PC-9 (cell line): ENCODE measurements at regions of chr1 and their contacts with region 1.

Region 1: GRCh38 chr1:201559679-201560162 is 20.8 kb downstream of the NAV1 start:
- DNase-seq: peak; percentile 53 to 73
- H3K4me3 ChIP-seq: no peak overlapping the region
- H3K27ac ChIP-seq: no peak overlapping the region
- H3K4me1 ChIP-seq: peaks cover 3% of the 10 kb centered on the region; the same call in 1 of the 2 replicates
- H3K27me3 ChIP-seq: no peaks in the 10 kb centered on the region
- CTCF ChIP-seq: peak; percentile 92

Region 2: DNA sequence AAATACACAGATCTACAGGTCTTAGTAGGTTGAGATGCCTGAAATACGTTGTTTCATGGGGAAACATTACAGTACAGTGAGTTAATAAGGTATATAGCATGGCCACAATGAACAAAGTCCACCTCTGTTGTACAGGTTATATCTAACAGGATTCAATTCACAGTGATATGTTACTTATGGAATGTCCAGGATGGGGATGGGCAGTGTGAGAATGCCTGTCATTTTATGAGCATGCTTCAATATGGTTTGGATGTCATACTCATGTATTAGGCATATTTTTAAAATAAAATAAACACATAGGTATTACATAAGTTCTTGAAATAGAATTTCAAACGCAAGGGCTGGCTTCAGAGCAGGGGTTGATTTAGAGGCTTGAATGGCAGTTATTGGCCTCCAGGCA is 84.6 kb before region 1 on chr1:
- CTCF ChIA-PET with region 1: no interaction called
- POLR2A ChIA-PET with region 1: no interaction called
- intact Hi-C with region 1: no loop called
- DNase-seq: peak in 1 of 2 experiments; percentile 77
- H3K4me3 ChIP-seq: no peak overlapping the region
- H3K27ac ChIP-seq: no peak overlapping the region
- H3K4me1 ChIP-seq: peaks cover 25% of the 10 kb centered on the region
- H3K27me3 ChIP-seq: no peaks in the 10 kb centered on the region
- CTCF ChIP-seq: no peak

Region 3: DNA sequence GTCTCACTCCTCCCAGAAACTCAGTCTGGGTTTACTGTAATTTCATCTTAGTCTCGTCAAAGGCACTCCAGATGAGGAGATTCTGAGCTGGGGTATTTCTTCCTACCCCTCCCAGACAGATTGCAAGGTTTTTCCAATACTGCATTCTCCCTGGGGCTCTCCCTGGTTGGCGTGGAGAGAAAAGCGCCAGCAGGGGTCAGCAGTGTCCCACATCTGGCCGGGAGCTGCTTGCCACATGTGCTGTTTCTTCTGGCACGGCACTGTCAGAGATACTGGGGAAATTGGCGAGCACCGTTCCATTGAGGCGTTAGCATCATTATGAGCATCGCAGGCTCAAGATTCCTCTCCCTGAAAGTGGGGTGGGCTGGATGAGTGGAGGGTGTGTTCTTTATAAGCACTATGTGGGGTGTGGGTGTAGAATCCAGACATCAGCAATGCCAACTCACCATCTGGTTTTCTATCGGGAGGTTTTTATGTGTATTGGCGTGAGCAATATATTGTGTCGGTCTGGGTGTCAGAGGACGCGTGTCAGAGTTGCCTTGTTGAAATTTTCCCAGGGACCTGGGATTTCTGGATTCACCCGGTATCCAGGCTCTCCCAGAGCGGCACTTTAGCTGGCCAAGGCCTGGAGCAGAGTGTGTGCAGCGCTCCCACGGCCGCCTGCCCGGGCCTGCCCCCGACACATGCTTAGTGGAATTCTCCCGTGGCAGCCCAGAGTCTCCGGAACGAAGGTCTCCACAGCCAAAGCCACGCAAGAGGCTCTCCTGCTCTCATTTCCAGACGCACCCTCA is 28.8 kb before region 1 on chr1:
- CTCF ChIA-PET with region 1: interaction called, 5 read pairs
- POLR2A ChIA-PET with region 1: no interaction called
- intact Hi-C with region 1: loop called (anchors 2 kb)
- DNase-seq: peak; percentile 48 to 78
- H3K4me3 ChIP-seq: no peak overlapping the region
- H3K27ac ChIP-seq: no peak overlapping the region
- H3K4me1 ChIP-seq: peaks cover 16% of the 10 kb centered on the region
- H3K27me3 ChIP-seq: no peaks in the 10 kb centered on the region
- CTCF ChIP-seq: peak; percentile 77

Region 4: GRCh38 chr1:201703621-201704439 is 144.1 kb after region 1 on chr1:
- CTCF ChIA-PET with region 1: interaction called, 14 read pairs
- POLR2A ChIA-PET with region 1: interaction called, 3 read pairs
- intact Hi-C with region 1: loop called (anchors 1 kb)
- DNase-seq: peak; percentile 66 to 83
- H3K4me3 ChIP-seq: no peak overlapping the region
- H3K27ac ChIP-seq: no peak overlapping the region
- H3K4me1 ChIP-seq: no peaks in the 10 kb centered on the region
- H3K27me3 ChIP-seq: no peaks in the 10 kb centered on the region
- CTCF ChIP-seq: peak; percentile 96

Region 5: DNA sequence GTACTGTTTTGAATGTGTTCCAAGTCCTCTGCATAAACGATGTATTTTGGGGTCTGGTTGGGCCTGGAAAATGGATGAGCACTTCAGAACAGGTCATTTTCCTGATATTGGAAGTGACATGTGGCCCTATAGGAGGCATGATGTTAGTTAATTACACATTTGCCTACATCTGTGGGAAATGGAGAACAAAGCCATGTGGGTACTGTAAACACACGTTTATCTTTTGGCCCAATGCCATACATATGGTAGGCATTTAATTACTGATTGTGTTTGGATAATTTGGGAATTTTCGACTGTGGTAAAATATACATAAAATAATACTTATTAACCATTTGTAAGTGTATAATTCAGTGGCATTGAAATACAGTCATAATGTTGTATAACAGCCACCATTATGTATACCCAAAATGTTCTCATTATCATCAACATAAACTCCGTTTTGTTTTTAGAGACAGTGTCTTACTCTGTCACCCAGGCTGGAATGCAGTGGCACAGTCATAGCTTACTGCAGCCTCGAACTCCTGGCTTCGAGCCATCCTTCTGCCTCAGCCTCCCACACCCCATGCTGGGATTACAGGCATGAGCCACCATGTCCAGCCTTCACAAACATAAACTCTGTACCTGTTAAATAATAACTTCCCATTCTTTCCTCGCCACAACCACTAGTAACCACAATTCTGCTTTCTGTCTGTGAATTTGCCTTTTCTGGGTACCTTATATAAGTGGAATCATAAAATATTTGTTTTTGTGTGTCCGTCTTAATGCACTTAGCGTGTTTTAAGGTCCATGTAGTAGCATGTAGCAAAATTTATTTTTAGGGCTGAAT is 410.8 kb after region 1 on chr1:
- CTCF ChIA-PET with region 1: no interaction called
- POLR2A ChIA-PET with region 1: no interaction called
- intact Hi-C with region 1: loop called (anchors 10 kb)
- DNase-seq: no peak
- H3K4me3 ChIP-seq: no peak overlapping the region
- H3K27ac ChIP-seq: no peak overlapping the region
- H3K4me1 ChIP-seq: 0 out of 2 replicates have a peak, but pooled peaks cover 6% of the 10 kb centered on the region
- H3K27me3 ChIP-seq: no peaks in the 10 kb centered on the region
- CTCF ChIP-seq: no peak